ENCODE measurements at regions of chr1 and their contacts with region 1.

Region 1: DNA sequence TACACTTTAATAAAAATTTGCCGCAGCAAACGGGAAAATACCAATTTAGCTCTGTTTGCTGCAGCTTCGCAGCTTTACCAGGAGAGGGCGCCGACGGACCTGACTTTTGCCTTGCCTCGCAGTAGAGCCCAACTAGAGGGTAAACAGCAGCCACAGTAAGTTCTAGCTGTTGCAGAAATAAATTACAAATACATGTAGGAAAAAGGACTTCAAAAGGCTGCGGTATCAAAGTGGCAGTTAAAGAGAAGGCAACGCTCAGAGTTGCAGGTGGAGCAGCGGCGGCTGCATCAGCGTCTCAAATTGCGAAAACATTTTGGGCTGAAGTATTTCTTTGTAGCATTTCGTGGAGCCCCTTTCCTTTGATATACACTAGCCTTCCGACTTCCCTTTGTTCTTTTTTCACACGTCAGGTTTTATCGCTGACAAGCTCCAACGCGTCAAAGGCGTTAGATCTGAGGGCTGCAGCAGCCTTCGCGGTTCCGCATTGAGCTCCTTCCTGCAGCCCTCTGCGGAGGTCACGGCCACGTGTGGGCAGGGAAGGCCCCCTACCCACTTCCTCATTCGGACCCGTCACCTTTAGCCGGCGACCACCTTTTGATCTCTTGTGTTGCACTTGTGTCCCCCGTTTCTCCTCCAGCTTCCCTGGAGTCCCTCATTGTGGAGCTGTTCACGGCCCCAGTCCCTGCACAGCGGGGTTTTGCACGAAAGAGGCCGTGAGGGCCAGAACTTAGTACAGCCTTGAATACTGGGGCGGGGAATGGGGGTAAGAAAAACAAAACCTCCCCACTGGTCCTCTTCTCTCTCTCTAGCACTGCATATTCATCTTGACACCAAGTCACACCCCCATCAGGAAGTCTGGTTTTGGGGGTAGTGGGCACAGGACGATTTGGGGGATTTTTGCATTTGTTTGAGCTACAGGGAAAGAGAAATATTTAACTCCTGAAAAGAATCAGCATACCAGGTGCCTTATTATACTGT is 72.8 kb downstream of the S1PR1 start:
- DNase-seq: no peak
- ATAC-seq: peak; percentile 83
- H3K4me3 ChIP-seq: no peak overlapping the region
- H3K27ac ChIP-seq: no peak overlapping the region
- H3K4me1 ChIP-seq: no peaks in the 10 kb centered on the region
- H3K27me3 ChIP-seq: peaks cover 23% of the 10 kb centered on the region
- CTCF ChIP-seq: peak; percentile 49 to 85 (median 82); a peak in 5 of 6 replicates
- POLR2A ChIP-seq: no peak
- RAD21 ChIP-seq: peak; percentile 76

Region 2: DNA sequence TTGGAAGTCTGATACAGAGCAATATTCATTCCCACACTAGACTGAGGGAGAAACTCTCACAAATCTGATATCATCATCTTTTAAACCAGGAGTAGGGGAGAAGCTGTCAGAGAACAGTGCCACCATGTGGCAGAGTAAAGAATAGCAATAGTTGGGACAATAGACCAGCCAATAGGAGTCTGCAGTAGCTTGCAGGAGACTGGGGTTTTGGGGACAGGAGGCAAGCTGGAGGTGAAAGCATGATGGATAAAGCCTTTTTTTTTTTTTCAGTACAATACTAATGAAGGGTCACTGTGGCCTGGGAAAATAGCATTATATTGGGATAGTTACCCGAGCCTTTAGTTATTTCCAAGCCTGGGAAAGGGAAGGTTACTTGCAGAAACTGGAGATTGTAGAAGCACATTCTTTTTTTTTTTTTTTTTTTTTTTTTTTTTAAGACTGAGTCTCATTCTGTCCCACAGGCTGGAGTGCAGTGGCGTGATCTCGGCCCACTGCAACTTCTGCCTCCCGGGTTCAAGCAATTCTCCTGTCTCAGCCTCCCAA is 47.9 kb after region 1 on chr1:
- CTCF ChIA-PET with region 1: interaction called, 57 read pairs
- POLR2A ChIA-PET with region 1: no interaction called
- RAD21 ChIA-PET with region 1: interaction called, 5 to 7 read pairs
- intact Hi-C with region 1: loop called (anchors 1 kb)
- DNase-seq: peak; percentile 59
- ATAC-seq: peak; percentile 99
- H3K4me3 ChIP-seq: no peak overlapping the region
- H3K27ac ChIP-seq: no peak overlapping the region
- H3K4me1 ChIP-seq: no peaks in the 10 kb centered on the region
- H3K27me3 ChIP-seq: 0 out of 2 replicates have a peak, but pooled peaks cover 8% of the 10 kb centered on the region
- CTCF ChIP-seq: peak; percentile 48 to 92 (median 76); a peak in 5 of 6 replicates
- POLR2A ChIP-seq: no peak
- RAD21 ChIP-seq: peak; percentile 71

Region 3: DNA sequence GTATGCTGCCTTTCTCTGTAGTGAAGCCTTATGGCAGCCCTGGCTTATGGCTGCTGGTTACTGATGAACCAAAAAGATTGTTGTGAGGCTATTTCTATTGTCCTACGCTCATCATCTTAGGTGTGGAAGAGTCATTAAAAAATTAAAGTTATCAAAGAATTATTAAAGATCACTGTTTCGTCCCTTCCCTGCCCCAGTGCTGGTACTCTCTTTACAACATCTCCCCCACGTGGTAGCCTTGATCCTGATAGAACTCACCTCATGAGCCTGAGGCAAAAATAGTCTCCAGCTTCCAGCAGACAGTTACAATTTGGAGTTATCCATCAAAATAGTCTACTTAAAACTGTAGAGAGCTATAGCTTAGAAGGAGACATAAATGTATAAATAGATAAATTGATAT is 128.7 kb after region 1 on chr1:
- CTCF ChIA-PET with region 1: interaction called, 30 read pairs
- POLR2A ChIA-PET with region 1: no interaction called
- RAD21 ChIA-PET with region 1: interaction called, 7 to 8 read pairs
- intact Hi-C with region 1: loop called (anchors 1 kb)
- DNase-seq: no peak
- ATAC-seq: peak; percentile 73
- H3K4me3 ChIP-seq: no peak overlapping the region
- H3K27ac ChIP-seq: no peak overlapping the region
- H3K4me1 ChIP-seq: no peaks in the 10 kb centered on the region
- H3K27me3 ChIP-seq: peaks cover 18% of the 10 kb centered on the region; the same call in 1 of the 2 replicates
- CTCF ChIP-seq: peak; percentile 22 to 34 (median 33); a peak in 3 of 6 replicates
- POLR2A ChIP-seq: no peak
- RAD21 ChIP-seq: peak; percentile 52